Pancreas (tissue), 10 donors: ENCODE measurements at regions of chr3 and their contacts with region 1.

Region 1: GRCh38 chr3:58008140-58009025 is at the start of gene FLNB:
- DNase-seq: peak; percentile 63 to 93 (median 85)
- ATAC-seq: peak; percentile 82 to 90 (median 88)
- H3K4me3 ChIP-seq: peak within 1 kb of the TSS; percentile 82 to 93 (median 90)
- H3K27ac ChIP-seq: peak within 1 kb of the TSS; percentile 53 to 84 (median 72)
- H3K4me1 ChIP-seq: peaks cover 7 to 17% (median 13%) of the 10 kb centered on the region in 3 donors
- H3K27me3 ChIP-seq: no peaks in the 10 kb centered on the region
- CTCF ChIP-seq: peak; percentile 52 to 66 (median 62)
- total RNA-seq, gene FLNB: 85.2 to 109 (median 98.3) TPM

Region 2: DNA sequence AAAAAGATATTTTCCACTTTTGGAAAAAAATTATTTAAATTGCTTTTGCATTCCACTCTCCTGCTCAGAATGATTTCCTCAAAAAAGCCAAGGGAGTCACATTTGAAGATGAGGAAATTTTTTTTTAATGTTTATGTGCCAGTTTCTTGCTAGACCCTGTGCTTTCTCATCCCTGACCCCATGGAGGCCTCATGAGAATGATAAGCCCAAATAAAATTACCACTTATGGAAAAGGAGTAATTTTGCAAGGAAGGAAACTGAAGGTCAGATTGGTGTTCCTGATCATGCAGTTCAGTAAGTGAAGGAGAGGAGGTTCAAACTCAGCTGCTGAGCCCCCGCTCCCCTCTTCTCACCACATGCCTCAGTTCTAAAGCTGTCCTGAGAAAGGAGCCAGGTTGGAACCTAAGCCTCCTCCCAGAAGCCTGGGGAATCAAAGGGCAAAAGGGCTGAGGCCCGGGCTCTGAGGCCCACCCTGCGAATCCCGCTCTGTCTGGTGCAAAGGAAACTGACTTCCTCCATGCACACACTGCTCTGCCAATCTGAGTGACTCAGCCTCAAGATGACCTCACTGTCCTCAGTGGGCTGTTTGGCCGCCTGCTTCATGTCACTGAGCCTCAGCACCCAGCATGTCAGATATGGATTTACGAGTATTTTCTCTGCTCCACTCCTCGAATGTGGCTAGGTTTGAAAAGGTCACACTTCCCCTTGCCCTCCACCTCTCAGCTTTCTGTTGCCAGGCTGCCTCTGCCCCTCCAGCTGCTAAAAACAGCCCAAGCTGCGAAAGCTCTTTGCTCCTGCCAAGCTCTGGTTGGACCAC is 57.1 kb before region 1 on chr3:
- intact Hi-C with region 1: no loop called
- DNase-seq: peak in 2 of 6 donors; percentile 24 to 41
- ATAC-seq: peak; percentile 31 to 86 (median 77)
- H3K4me3 ChIP-seq: no peak overlapping the region
- H3K27ac ChIP-seq: peak overlapping the region in 3 of 4 donors; percentile 17 to 66 (median 18)
- H3K4me1 ChIP-seq: peaks cover 0 to 14% (median 0%) of the 10 kb centered on the region in 3 donors
- H3K27me3 ChIP-seq: no peaks in the 10 kb centered on the region
- CTCF ChIP-seq: no peak

Region 3: GRCh38 chr3:57961828-57962447 is 46.4 kb before region 1 on chr3:
- intact Hi-C with region 1: no loop called
- DNase-seq: no peak
- ATAC-seq: peak in 1 of 4 donors; percentile 20
- H3K4me3 ChIP-seq: no peak overlapping the region
- H3K27ac ChIP-seq: no peak overlapping the region
- H3K4me1 ChIP-seq: no peaks in the 10 kb centered on the region
- H3K27me3 ChIP-seq: no peaks in the 10 kb centered on the region
- CTCF ChIP-seq: no peak

Region 4: DNA sequence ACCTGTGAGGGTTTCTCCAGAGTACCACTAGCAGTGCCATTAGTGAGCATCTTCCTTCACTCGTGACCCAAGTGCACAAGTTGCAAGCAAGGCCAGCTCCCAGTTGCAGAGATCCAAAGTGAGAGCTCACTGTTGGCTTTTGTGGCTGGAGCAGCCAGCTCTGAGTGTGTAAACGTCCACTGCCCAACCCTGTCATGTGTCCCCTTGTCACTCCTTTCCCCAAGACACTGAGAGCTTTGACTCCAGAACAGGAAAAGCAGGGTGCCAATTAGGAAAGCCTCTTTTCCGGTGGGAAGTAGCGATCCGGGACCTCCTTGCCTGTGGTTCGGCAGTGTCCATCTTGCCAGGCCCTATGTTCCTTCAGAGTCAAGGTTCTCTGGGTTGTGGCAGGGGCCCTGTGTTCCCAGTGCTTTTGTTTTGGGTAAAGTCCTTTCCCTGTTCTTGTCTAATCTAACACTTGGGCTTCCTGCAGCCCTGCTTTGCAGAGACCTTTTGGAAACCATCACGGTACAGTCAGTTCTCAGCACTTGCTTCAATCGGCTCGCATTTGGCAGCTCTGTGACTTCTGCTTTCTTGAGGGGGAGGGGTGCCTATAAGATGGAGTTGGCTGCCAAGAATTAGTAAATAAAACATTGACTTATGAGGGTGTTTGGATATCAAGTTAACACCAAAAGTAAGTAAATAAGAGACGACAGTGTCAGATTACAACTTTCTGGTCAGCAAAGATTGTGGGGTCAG is 111.9 kb after region 1 on chr3:
- intact Hi-C with region 1: loop called in 1 of 3 experiments (anchors 5 kb)
- DNase-seq: peak in 4 of 6 donors; percentile 11 to 64 (median 44)
- ATAC-seq: peak; percentile 54 to 82 (median 70)
- H3K4me3 ChIP-seq: no peak overlapping the region
- H3K27ac ChIP-seq: peak overlapping the region in 2 of 4 donors; percentile 1 to 33
- H3K4me1 ChIP-seq: peaks cover 24 to 37% (median 27%) of the 10 kb centered on the region in 3 donors
- H3K27me3 ChIP-seq: no peaks in the 10 kb centered on the region
- CTCF ChIP-seq: no peak

Region 5: GRCh38 chr3:58173664-58174398 is 165.4 kb after region 1 on chr3:
- intact Hi-C with region 1: loop called in 2 of 3 experiments (anchors 5 to 10 kb)
- DNase-seq: peak; percentile 72 to 91 (median 84)
- ATAC-seq: peak; percentile 51 to 68 (median 56)
- H3K4me3 ChIP-seq: no peak overlapping the region
- H3K27ac ChIP-seq: peak overlapping the region; percentile 53 to 87 (median 80)
- H3K4me1 ChIP-seq: peaks cover 33 to 51% (median 43%) of the 10 kb centered on the region in 3 donors
- H3K27me3 ChIP-seq: no peaks in the 10 kb centered on the region
- CTCF ChIP-seq: peak in 1 of 4 donors; percentile 22

Region 6: GRCh38 chr3:58299839-58300516 is 291.6 kb after region 1 on chr3:
- intact Hi-C with region 1: loop called in 1 of 3 experiments (anchors 5 kb)
- DNase-seq: no peak
- ATAC-seq: peak in 3 of 4 donors; percentile 60 to 72 (median 69)
- H3K4me3 ChIP-seq: no peak overlapping the region
- H3K27ac ChIP-seq: no peak overlapping the region
- H3K4me1 ChIP-seq: no peaks in the 10 kb centered on the region
- H3K27me3 ChIP-seq: no peaks in the 10 kb centered on the region
- CTCF ChIP-seq: peak in 3 of 4 donors; percentile 14 to 40 (median 39)